ENCODE measurements at regions of chr15 and their contacts with region 1.

Region 1: DNA sequence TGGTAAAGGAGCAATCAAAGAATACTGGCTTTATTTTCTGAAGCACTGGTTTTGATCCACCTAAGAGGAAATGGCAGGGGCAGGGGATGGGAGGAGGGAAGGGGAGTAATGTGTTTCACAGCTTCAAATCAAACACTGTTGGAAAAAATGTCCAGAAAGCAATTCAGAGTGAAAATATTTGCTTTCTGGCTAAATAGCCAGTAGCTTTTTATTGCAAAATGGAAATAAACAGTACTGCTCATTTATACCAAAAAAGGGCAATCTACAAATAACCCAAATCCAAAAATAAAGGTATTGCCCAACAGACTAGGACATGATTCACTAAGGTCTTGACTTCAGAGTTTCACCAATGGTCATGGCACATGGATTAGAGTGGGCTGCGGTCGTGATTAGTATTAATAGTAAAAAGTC is 279.3 kb upstream of the THBS1 start:
- DNase-seq: peak; percentile 77
- ATAC-seq: peak; percentile 7; the same call in 1 of the 2 replicates
- H3K4me3 ChIP-seq: no peak overlapping the region
- H3K27ac ChIP-seq: peak overlapping the region; percentile 96
- H3K4me1 ChIP-seq: peaks cover 24% of the 10 kb centered on the region
- H3K27me3 ChIP-seq: no peaks in the 10 kb centered on the region
- CTCF ChIP-seq: no peak
- POLR2A ChIP-seq: no peak
- RAD21 ChIP-seq: no peak

Region 2: DNA sequence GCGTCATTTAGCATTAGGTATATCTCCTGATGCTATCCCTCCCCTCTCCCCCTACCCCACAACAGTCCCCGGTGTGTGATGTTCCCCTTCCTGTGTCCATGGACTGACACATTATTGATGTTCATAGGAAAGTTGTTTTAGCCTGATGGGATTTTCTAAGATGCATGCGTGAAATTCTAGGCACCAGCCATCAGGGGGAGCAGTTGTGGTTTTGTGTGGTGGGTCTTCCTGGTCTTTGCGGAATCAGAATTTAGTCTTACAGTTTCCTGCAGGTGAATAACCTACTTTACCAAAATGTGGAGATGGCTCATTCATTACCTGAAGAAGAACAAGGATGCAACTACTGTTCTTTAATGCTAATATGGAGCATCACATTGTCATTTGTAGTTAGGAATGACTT is 175.7 kb before region 1 on chr15:
- CTCF ChIA-PET with region 1: no interaction called
- POLR2A ChIA-PET with region 1: no interaction called
- dilution Hi-C with region 1: no loop called
- in situ Hi-C with region 1: no loop called
- intact Hi-C with region 1: loop called (anchors 5 kb)
- DNase-seq: peak; percentile 68
- ATAC-seq: no peak
- H3K4me3 ChIP-seq: no peak overlapping the region
- H3K27ac ChIP-seq: peak overlapping the region; percentile 39; the same call in 1 of the 2 replicates
- H3K4me1 ChIP-seq: peaks cover 37% of the 10 kb centered on the region
- H3K27me3 ChIP-seq: no peaks in the 10 kb centered on the region
- CTCF ChIP-seq: peak; percentile 64
- POLR2A ChIP-seq: no peak
- RAD21 ChIP-seq: peak; percentile 62

Region 3: GRCh38 chr15:39140060-39140604 is 161.5 kb before region 1 on chr15:
- CTCF ChIA-PET with region 1: no interaction called
- POLR2A ChIA-PET with region 1: no interaction called
- dilution Hi-C with region 1: no loop called
- in situ Hi-C with region 1: no loop called
- intact Hi-C with region 1: loop called (anchors 1 kb)
- DNase-seq: peak; percentile 98
- ATAC-seq: peak; percentile 85
- H3K4me3 ChIP-seq: no peak overlapping the region; the same call in 1 of the 2 replicates
- H3K27ac ChIP-seq: peak overlapping the region; percentile 93
- H3K4me1 ChIP-seq: peaks cover 20% of the 10 kb centered on the region
- H3K27me3 ChIP-seq: no peaks in the 10 kb centered on the region
- CTCF ChIP-seq: no peak
- POLR2A ChIP-seq: peak; percentile 56; the same call in 1 of the 2 replicates
- RAD21 ChIP-seq: peak; percentile 31; the same call in 1 of the 2 replicates

Region 4: DNA sequence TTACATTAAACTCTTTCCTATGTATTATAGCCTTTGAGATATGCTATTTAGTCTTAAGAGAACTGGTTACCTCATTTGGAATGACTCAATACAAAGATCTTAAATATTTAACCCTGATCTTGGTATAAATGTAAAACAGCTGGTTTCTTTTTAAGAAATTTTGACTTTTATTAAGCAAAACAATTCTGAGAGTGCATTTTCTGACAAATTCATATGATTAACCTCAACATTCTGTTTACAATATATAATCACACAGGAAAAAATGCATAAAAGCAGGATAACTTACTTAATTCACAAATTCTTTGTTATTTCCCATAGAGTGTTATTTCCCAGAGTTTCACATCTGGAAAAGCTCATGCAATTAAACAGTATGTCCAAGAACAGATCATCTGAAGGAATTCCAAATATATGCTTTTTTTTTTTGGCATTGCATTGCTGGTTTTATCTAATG is 121.1 kb before region 1 on chr15:
- CTCF ChIA-PET with region 1: interaction called, 3 read pairs
- POLR2A ChIA-PET with region 1: no interaction called
- dilution Hi-C with region 1: no loop called
- in situ Hi-C with region 1: no loop called
- intact Hi-C with region 1: loop called (anchors 2 kb)
- DNase-seq: peak; percentile 88
- ATAC-seq: peak; percentile 66
- H3K4me3 ChIP-seq: no peak overlapping the region
- H3K27ac ChIP-seq: peak overlapping the region; percentile 100; the same call in 1 of the 2 replicates
- H3K4me1 ChIP-seq: peaks cover 20% of the 10 kb centered on the region
- H3K27me3 ChIP-seq: no peaks in the 10 kb centered on the region
- CTCF ChIP-seq: no peak
- POLR2A ChIP-seq: no peak
- RAD21 ChIP-seq: no peak

Region 5: GRCh38 chr15:39232512-39232911 is 69.1 kb before region 1 on chr15:
- CTCF ChIA-PET with region 1: no interaction called
- POLR2A ChIA-PET with region 1: no interaction called
- dilution Hi-C with region 1: no loop called
- in situ Hi-C with region 1: no loop called
- intact Hi-C with region 1: loop called (anchors 5 kb)
- DNase-seq: peak; percentile 95
- ATAC-seq: peak; percentile 86
- H3K4me3 ChIP-seq: no peak overlapping the region
- H3K27ac ChIP-seq: peak overlapping the region; percentile 44
- H3K4me1 ChIP-seq: peaks cover 22% of the 10 kb centered on the region
- H3K27me3 ChIP-seq: no peaks in the 10 kb centered on the region
- CTCF ChIP-seq: no peak
- POLR2A ChIP-seq: no peak
- RAD21 ChIP-seq: peak; percentile 22; the same call in 1 of the 2 replicates

Region 6: DNA sequence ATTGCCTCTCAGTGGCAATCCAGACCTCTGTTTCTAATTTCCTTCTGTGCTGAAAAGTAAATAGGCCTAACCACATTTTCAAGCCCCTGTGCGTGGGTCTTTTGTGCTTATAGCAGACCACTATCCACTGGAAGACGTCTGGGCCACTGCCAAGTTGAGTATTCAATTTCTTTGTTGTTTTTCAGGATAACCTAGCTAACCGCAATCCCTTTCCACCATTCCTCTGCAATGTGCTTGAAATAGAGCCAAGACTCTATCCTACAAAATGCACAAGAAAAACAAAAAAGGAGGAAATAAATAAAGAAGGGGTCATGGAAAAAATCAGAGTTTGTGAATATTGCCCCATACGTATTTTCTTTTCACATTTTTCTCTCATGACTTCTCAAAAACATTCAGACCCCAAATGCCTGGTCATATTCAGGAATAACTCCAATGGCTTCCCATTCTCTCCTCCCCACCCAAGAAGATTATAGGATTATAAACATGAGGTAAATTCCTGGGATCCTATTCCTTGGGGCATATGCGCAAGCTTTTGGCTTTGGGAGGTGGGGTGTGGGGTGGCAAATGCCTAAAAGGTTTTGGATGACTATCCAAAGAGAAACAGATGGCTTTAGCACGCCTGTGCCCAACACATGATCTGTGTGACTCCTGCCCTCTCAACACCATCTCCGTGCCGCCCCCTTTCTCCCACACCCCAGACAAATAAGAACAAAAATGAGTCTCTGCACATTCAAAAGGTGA is 61.4 kb after region 1 on chr15:
- CTCF ChIA-PET with region 1: interaction called, 4 read pairs
- POLR2A ChIA-PET with region 1: no interaction called
- dilution Hi-C with region 1: no loop called
- in situ Hi-C with region 1: no loop called
- intact Hi-C with region 1: loop called (anchors 2 kb)
- DNase-seq: peak; percentile 96
- ATAC-seq: peak; percentile 61
- H3K4me3 ChIP-seq: no peak overlapping the region
- H3K27ac ChIP-seq: peak overlapping the region; percentile 78; the same call in 1 of the 2 replicates
- H3K4me1 ChIP-seq: peaks cover 16% of the 10 kb centered on the region
- H3K27me3 ChIP-seq: no peaks in the 10 kb centered on the region
- CTCF ChIP-seq: no peak
- POLR2A ChIP-seq: no peak
- RAD21 ChIP-seq: no peak

Region 7: GRCh38 chr15:39419651-39420050 is 118.1 kb after region 1 on chr15:
- CTCF ChIA-PET with region 1: no interaction called
- POLR2A ChIA-PET with region 1: no interaction called
- dilution Hi-C with region 1: no loop called
- in situ Hi-C with region 1: no loop called
- intact Hi-C with region 1: no loop called
- DNase-seq: no peak
- ATAC-seq: no peak
- H3K4me3 ChIP-seq: no peak overlapping the region
- H3K27ac ChIP-seq: no peak overlapping the region
- H3K4me1 ChIP-seq: peaks cover 3% of the 10 kb centered on the region
- H3K27me3 ChIP-seq: no peaks in the 10 kb centered on the region; the same call in 1 of the 2 replicates
- CTCF ChIP-seq: no peak
- POLR2A ChIP-seq: no peak
- RAD21 ChIP-seq: no peak

Region 8: DNA sequence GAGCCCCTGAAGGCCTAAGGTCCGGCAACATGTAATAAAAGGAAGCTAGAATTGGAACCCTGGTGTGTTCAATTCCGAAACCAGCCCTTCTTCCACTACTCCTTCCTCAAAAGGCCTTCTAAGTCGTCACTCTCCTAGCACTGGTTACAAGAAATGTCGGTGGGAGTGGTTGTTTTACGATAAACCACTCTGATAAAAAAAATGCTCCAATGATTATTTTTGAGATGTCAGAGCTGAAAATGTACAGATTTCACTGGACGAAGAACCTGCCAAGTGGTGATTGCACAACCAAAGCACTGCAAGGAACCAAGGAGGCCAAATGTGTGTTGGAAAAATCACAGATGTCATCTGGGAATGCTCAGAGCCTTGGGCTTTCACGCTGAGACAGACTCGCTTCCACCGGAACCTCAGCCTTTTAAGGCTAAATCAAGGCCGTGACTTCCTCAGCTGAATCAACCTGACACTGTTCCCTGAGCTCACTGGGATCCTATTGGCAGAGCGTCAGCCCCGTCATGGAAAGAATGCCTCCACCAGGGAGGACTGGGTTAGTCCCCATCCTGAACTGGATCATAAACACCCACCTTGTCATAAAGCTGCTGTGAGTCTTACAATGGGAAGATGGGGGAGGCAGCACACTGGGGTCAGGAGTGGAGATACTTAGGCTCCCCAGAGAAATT is 171.2 kb after region 1 on chr15:
- CTCF ChIA-PET with region 1: no interaction called
- POLR2A ChIA-PET with region 1: no interaction called
- dilution Hi-C with region 1: no loop called
- in situ Hi-C with region 1: loop called (anchors 10 kb)
- intact Hi-C with region 1: loop called (anchors 2 kb)
- DNase-seq: peak; percentile 99
- ATAC-seq: peak; percentile 93
- H3K4me3 ChIP-seq: no peak overlapping the region
- H3K27ac ChIP-seq: peak overlapping the region; percentile 99; the same call in 1 of the 2 replicates
- H3K4me1 ChIP-seq: peaks cover 15% of the 10 kb centered on the region; the same call in 1 of the 2 replicates
- H3K27me3 ChIP-seq: no peaks in the 10 kb centered on the region
- CTCF ChIP-seq: no peak
- POLR2A ChIP-seq: no peak
- RAD21 ChIP-seq: no peak

Measured in IMR-90 (cell line).